T-cell (primary cell): ENCODE measurements at regions of chr6 and their contacts with region 1.

Region 1: GRCh38 chr6:47631269-47631772 is 67.1 kb upstream of the ADGRF4 start:
- DNase-seq: peak in 7 of 35 experiments; percentile 1 to 53 (median 6)
- ATAC-seq: peak; percentile 22 to 52 (median 40)
- H3K4me3 ChIP-seq: no peak overlapping the region
- H3K4me3 Mint-ChIP-seq: no peak overlapping the region
- H3K27ac ChIP-seq: no peak overlapping the region
- H3K27ac Mint-ChIP-seq: peak overlapping the region in 1 of 2 donors; percentile 53
- H3K4me1 ChIP-seq: peaks cover 6 to 8% of the 10 kb centered on the region in 2 experiments
- H3K4me1 Mint-ChIP-seq: peaks cover 17 to 24% (median 21%) of the 10 kb centered on the region in 3 donors
- H3K27me3 ChIP-seq: no peaks in the 10 kb centered on the region
- H3K27me3 Mint-ChIP-seq: no peaks in the 10 kb centered on the region

Region 2: GRCh38 chr6:47714802-47715201 is 83.5 kb after region 1 on chr6:
- CTCF ChIA-PET with region 1: no interaction called
- POLR2A ChIA-PET with region 1: no interaction called
- DNase-seq: no peak
- ATAC-seq: no peak
- H3K4me3 ChIP-seq: no peak overlapping the region
- H3K4me3 Mint-ChIP-seq: no peak overlapping the region
- H3K27ac ChIP-seq: no peak overlapping the region
- H3K27ac Mint-ChIP-seq: no peak overlapping the region
- H3K4me1 ChIP-seq: no peaks in the 10 kb centered on the region
- H3K4me1 Mint-ChIP-seq: peaks cover 0 to 6% (median 0%) of the 10 kb centered on the region in 3 donors
- H3K27me3 ChIP-seq: peaks cover 0 to 2% of the 10 kb centered on the region in 2 experiments
- H3K27me3 Mint-ChIP-seq: peaks cover 15 to 16% of the 10 kb centered on the region in 2 donors

Region 3: DNA sequence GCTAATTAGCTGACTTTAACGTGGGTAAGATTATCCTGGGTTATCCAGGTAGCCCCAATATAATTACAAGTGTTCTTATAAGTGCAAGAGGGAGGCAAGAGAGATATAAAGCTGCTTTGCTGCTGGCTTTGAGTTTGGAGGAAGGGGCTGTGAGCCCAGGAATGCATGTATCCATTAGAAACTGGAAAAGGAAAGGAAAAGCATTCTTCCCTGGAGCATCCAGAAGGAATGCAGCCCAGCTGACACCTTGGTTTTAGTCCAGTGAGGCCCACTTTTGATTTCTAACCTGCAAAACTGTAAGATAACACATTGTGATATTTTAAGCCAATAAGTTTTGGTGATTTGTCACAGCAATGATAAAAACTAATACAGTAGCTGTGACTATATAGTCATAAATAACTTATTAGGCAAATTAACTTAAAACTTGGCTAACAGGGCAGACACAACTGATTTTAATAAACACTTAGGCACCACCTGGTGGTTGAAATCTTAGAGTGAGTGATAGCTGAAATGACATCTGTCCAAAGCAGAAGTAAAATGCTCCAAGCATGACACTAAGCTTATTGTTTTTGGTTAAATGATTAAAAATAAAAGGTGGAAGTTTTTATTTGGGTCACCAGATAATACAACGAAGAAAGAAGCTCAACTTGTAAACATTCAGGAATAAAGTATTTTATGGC is 102.7 kb after region 1 on chr6:
- CTCF ChIA-PET with region 1: interaction called, 4 to 11 read pairs
- POLR2A ChIA-PET with region 1: no interaction called
- DNase-seq: peak in 3 of 35 experiments; percentile 2 to 34 (median 3)
- ATAC-seq: no peak
- H3K4me3 ChIP-seq: no peak overlapping the region
- H3K4me3 Mint-ChIP-seq: no peak overlapping the region
- H3K27ac ChIP-seq: no peak overlapping the region
- H3K27ac Mint-ChIP-seq: no peak overlapping the region
- H3K4me1 ChIP-seq: no peaks in the 10 kb centered on the region
- H3K4me1 Mint-ChIP-seq: peaks cover 0 to 3% (median 2%) of the 10 kb centered on the region in 3 donors
- H3K27me3 ChIP-seq: peaks cover 0 to 2% of the 10 kb centered on the region in 2 experiments
- H3K27me3 Mint-ChIP-seq: peaks cover 0 to 2% of the 10 kb centered on the region in 2 donors

Region 4: DNA sequence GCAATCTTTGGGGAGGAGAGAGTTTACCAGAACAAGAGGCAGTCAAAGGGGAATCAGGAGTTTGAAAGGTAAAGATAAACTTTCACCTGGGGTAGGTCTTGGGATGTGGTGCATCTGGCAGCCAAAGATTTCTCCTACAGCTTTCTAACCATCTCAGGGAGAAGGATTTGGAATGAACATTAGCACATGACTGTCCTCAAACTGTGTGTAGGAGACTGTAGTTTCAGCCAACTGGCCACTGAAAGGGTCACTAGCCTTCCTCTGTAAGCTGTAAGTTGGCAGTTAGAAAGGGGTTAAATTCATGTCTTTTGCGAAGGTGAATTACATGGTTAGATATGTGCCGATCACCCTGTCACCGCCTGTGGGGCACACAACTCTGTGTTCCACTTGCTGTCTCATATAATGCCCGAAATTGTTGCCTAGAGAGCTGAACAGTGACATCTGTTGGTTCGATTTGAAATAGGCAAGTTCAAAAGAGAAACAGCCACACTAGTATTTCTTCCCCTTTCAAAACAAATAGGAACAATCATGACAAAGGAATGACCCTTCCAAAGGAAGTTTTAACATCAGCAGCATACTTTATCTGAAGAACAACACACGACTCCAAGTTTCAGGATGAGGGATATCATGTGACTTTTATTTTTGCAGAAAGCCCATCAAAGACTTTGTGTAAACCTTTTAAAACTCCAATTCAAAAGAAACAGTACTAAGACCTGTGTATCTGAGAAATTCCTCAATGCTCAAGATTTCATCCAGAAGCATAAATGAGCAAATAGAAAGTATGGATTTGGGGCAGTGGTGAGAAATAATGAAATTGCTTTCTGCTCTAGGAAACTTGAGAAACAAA is 149.4 kb after region 1 on chr6:
- CTCF ChIA-PET with region 1: interaction called, 6 to 34 read pairs
- POLR2A ChIA-PET with region 1: no interaction called
- DNase-seq: peak in 22 of 35 experiments; percentile 0 to 64 (median 8)
- ATAC-seq: peak; percentile 65 to 77 (median 74)
- H3K4me3 ChIP-seq: no peak overlapping the region
- H3K4me3 Mint-ChIP-seq: no peak overlapping the region
- H3K27ac ChIP-seq: no peak overlapping the region
- H3K27ac Mint-ChIP-seq: peak overlapping the region in 1 of 2 donors; percentile 9
- H3K4me1 ChIP-seq: peaks cover 2 to 3% of the 10 kb centered on the region in 2 experiments
- H3K4me1 Mint-ChIP-seq: peaks cover 8% of the 10 kb centered on the region in 3 donors
- H3K27me3 ChIP-seq: no peaks in the 10 kb centered on the region
- H3K27me3 Mint-ChIP-seq: peaks cover 1 to 6% of the 10 kb centered on the region in 2 donors